ENCODE measurements at regions of chr15 and their contacts with region 1.

Region 1: DNA sequence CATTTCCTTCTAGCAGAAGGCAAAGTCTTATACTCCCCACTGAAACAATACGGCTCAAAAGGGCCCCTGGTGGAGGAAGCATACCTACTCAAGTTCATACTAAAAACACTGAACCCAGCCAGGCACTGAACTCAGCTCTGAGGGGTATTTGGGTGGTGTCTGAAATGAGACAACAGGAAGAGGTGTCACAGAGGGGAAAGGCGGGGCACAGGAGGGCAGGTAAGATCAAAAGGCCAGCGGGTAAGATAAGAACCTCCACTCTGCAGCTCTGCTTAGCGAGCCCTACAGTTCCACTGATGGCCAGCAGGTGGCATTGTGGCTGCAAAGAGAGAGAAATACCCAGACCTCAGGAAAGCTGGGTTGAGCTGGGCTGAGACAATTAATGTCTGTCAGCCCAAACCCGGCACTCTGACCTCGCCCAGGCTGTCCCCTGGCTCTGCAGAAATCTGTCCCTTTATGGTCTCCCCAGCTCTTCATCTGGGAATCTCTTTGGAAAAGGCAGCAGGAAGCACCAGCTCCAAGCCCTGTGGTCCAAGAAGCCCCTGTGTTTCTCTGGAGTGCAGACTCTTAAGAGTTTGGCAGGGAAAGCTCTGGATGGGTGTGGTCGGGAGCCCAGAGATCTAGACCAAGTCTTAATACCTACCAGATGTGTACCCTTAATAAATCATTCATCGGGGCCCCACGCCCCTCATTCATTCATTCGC is 8.4 kb downstream of the MFGE8 start:
- DNase-seq: peak; percentile 85
- CTCF ChIP-seq: peak; percentile 93

Region 2: DNA sequence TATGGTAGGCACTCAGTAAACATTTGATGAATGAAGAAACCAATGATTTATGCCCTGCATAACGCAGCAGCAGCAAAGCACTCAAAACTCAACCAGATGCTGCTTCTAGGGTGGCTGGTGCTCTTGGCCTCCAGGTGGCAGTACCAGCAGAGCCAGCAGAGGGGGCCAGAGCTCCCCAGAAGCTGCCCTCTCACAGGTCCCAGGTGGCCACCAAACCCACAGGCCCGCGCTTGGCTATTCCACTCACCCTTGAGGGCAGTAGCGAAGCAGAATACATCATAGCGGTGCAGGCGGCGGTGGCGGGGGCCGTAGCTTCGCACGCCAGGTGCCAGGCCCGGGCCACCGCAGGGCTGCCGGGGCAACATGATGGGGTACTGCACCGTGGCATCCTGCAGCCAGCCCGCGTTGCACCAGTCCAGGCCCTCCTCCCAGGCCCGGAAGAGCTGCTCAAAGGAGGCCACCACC is 26.0 kb before region 1 on chr15:
- CTCF ChIA-PET with region 1: interaction called, 14 read pairs
- POLR2A ChIA-PET with region 1: no interaction called
- DNase-seq: peak; percentile 77
- CTCF ChIP-seq: peak; percentile 61

Region 3: DNA sequence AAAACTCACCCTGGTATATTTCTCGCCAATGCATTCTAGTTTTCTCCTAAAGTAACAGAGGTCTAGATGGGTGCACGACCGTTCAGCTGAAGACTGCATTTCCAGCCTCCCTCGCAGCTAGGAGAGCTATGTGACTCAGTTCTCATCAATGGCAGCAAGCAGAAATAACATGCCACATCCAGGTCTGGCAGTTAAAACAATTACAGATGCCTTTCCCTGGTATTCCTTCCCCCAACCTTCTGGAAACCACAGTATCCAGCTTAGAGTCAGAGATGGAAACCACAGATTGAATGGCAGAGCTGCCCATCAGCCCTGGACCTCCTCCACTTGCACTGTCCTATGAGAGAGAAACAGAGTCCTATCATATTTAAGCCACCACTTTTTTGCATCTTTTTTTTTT is 14.3 kb before region 1 on chr15:
- CTCF ChIA-PET with region 1: interaction called, 24 read pairs
- POLR2A ChIA-PET with region 1: no interaction called
- DNase-seq: no peak
- CTCF ChIP-seq: no peak

Region 4: GRCh38 chr15:89009080-89009479 is 104.3 kb after region 1 on chr15:
- CTCF ChIA-PET with region 1: interaction called, 12 read pairs
- POLR2A ChIA-PET with region 1: no interaction called
- DNase-seq: no peak
- CTCF ChIP-seq: no peak

Region 5: GRCh38 chr15:89017370-89018066 is 112.7 kb after region 1 on chr15:
- CTCF ChIA-PET with region 1: interaction called, 29 read pairs
- POLR2A ChIA-PET with region 1: no interaction called
- DNase-seq: peak; percentile 73
- CTCF ChIP-seq: peak; percentile 72

Measured in GM10248 (cell line).